ENCODE measurements at regions of chr1 and their contacts with region 1.

Region 1: GRCh38 chr1:207454046-207454964 is at the start of gene CR2:
- DNase-seq: peak; percentile 69
- H3K4me3 Mint-ChIP-seq: peak within 1 kb of the TSS; percentile 56
- H3K27ac Mint-ChIP-seq: no peak within 1 kb of the TSS
- H3K4me1 Mint-ChIP-seq: peaks cover 7% of the 10 kb centered on the region
- H3K27me3 Mint-ChIP-seq: peaks cover 49% of the 10 kb centered on the region
- total RNA-seq, gene CR2: 0.24 TPM in 1 of 2 replicates, not detected in the other

Region 2: GRCh38 chr1:207335695-207336363 is 118.5 kb before region 1 on chr1:
- intact Hi-C with region 1: no loop called
- DNase-seq: peak; percentile 76
- H3K4me3 Mint-ChIP-seq: peak overlapping the region; percentile 71
- H3K27ac Mint-ChIP-seq: peak overlapping the region; percentile 95
- H3K4me1 Mint-ChIP-seq: peaks cover 57% of the 10 kb centered on the region
- H3K27me3 Mint-ChIP-seq: no peaks in the 10 kb centered on the region

Region 3: GRCh38 chr1:207414606-207415108 is 39.6 kb before region 1 on chr1:
- intact Hi-C with region 1: loop called (anchors 5 kb)
- DNase-seq: peak; percentile 69
- H3K4me3 Mint-ChIP-seq: peak overlapping the region; percentile 12
- H3K27ac Mint-ChIP-seq: peak overlapping the region; percentile 45
- H3K4me1 Mint-ChIP-seq: peaks cover 26% of the 10 kb centered on the region
- H3K27me3 Mint-ChIP-seq: peaks cover 9% of the 10 kb centered on the region

Region 4: DNA sequence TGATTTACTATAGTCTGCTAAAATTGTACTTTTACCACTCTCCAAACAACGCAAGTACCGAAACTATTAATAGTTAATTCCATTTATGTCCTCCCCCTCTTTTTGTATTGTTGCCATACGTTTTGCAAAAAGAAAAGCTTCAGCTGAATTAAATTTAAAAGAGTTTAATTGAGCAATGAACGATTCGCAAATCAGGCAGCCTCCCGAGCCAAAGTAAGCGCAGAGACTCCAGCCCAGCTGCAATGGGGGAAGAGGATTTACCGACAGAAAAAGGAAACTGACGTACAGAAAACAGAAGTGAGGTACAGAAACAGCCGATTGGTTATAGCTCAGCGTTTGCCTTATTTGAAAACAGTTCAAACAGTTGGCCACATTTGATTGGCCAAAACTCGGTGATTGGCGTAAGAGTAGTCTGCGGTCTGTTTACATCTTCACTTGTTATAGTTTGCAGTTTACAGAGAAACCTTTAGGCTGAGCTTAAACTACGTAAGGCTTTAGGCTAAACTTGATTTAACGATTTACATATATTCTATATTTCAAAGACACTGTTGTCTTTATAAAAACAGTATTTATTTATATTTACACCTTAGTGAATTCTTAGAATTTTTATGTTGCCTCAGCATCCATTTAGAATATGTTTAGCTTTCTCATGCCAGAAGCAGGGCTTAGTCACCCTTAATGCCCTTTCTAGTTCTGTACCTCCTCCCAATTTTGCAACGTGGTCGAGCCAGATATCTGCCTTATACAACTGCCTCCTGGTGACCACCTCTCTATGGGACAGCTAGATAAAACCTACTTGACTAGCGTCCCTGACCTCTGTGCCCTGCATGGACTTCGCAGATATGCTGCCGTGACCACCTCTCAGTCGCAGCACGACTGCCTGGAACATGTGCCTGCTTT is 65.5 kb after region 1 on chr1:
- intact Hi-C with region 1: no loop called
- DNase-seq: peak; percentile 51
- H3K4me3 Mint-ChIP-seq: no peak overlapping the region
- H3K27ac Mint-ChIP-seq: no peak overlapping the region
- H3K4me1 Mint-ChIP-seq: no peaks in the 10 kb centered on the region
- H3K27me3 Mint-ChIP-seq: peaks cover 20% of the 10 kb centered on the region